ENCODE measurements at regions of chr3 and their contacts with region 1.

Region 1: GRCh38 chr3:124905849-124906248 is 18.7 kb upstream of the ITGB5 start:
- DNase-seq: no peak
- ATAC-seq: no peak
- H3K4me3 ChIP-seq: no peak overlapping the region
- H3K27ac ChIP-seq: no peak overlapping the region
- H3K4me1 ChIP-seq: no peaks in the 10 kb centered on the region
- H3K27me3 ChIP-seq: peaks cover 5 to 11% of the 10 kb centered on the region in 2 experiments; a peak in 3 of 5 replicates
- CTCF ChIP-seq: peak in 1 of 3 experiments; percentile 6; a peak in 1 of 6 replicates
- EP300 ChIP-seq: no peak
- POLR2A ChIP-seq: no peak
- RAD21 ChIP-seq: 0 out of 4 replicates have a peak, but pooled peaks of 1 of the 2 experiments have one; percentile 30

Region 2: DNA sequence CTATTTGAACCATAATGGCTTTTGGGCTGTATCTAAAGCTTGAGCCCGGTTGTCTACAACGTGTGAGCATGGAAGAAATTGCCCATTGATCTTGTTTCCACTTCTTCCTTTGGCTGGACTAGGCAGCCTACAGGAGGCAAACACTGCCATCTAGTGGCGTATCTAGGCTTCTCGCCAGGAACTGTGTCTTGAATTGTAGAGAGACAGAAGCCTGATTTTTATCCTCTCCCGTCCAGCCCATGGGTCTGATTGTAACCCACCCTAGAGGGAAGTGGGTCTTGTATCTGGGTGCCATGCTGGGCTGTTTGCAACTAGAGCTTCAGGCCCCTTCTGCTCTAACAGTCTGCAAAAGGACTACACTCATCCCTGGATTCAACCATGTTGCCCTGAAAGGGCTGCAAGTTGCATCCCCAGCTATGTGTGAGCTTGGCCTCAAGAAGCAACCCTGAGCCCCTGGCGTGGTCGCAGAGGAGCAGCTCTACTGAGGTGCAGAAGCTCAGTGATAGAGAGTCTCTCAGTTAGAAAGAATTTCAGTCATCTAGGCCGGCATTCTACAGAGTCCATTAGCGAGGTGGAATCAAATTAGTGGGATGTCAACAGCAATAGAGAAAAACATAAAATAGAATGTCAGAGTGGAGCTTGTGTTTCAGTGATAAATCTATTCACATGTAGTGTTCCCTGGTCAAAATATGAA is 345.8 kb before region 1 on chr3:
- CTCF ChIA-PET with region 1: no interaction called
- POLR2A ChIA-PET with region 1: no interaction called
- in situ Hi-C with region 1: no loop called
- intact Hi-C with region 1: loop called (anchors 5 kb)
- DNase-seq: peak; percentile 62 to 77 (median 66)
- ATAC-seq: peak; percentile 91
- H3K4me3 ChIP-seq: no peak overlapping the region
- H3K27ac ChIP-seq: no peak overlapping the region
- H3K4me1 ChIP-seq: peaks cover 0 to 5% of the 10 kb centered on the region in 2 experiments; a peak in 3 of 5 replicates
- H3K27me3 ChIP-seq: peaks cover 0 to 9% of the 10 kb centered on the region in 2 experiments; a peak in 1 of 5 replicates
- CTCF ChIP-seq: peak; percentile 73 to 79 (median 77)
- EP300 ChIP-seq: no peak
- POLR2A ChIP-seq: no peak
- RAD21 ChIP-seq: peak; percentile 42 to 67

Region 3: DNA sequence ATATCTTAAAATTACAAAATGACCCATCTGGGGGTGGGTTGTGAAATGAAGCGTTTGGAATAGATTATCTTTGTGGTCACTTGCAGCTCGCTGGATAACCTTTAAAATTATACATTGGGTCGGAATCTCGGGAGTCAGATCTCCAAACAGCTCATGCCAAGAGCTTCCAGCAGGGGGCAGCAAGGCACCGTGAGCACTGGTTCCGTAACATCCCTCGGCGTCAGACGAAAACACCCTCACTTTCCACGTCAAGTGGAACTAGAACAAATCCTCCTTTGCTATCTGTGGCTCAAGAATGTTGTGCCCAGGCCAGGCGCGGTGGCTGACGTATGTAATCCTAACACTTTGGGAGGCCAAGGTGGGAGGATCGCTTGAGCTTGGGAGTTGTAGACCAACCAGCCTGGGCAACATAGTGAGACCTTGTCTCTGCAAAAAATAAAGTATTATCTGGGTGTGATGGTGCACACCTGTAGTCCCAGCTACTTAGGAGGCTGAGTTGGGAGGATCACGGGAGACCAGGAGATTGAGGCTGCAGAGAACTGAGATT is 144.5 kb before region 1 on chr3:
- CTCF ChIA-PET with region 1: interaction called, 25 read pairs
- POLR2A ChIA-PET with region 1: no interaction called
- in situ Hi-C with region 1: loop called (anchors 5 kb)
- intact Hi-C with region 1: loop called (anchors 1 kb)
- DNase-seq: peak; percentile 62 to 77 (median 66)
- ATAC-seq: peak; percentile 91
- H3K4me3 ChIP-seq: no peak overlapping the region
- H3K27ac ChIP-seq: no peak overlapping the region
- H3K4me1 ChIP-seq: no peaks in the 10 kb centered on the region; a peak in 1 of 5 replicates
- H3K27me3 ChIP-seq: no peaks in the 10 kb centered on the region
- CTCF ChIP-seq: peak; percentile 83 to 88 (median 86)
- EP300 ChIP-seq: no peak
- POLR2A ChIP-seq: no peak
- RAD21 ChIP-seq: peak; percentile 81 to 89

Region 4: DNA sequence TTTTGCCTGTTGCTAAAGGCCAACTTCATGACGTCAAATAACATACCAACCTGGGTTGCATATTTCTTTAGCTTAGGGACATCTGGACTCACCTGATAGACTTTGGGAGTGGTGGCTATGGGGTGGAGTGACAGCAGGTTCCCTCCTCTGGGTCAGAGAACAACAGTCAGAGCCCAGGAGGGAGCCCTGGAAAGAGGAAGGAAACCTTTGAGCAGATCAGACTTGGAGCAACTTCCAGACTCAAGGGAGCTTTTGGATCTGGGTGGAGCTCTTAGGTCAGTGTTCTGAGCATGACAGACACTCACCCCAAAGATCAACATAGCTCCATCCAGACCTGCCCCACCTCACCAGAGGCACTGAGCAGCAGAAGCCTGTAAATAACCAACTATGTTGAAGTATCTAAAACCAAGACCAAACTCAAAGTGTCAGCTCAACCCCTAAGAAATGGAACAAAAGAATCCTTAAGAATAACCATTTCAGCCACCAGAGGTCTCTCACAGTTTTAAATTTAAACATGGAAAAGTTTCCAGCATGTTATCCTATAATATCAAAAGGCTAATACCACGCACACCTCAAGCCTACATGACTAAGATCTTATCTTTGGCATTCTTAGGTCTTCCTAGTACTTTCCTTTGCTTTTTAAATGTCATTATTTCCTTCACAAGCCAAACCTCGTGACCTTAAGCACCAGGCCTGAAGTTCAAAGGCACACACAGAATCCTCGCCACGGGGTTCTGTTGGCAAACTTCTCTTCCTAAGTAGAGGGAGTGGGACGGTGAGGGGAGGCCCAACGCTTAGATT is 119.2 kb before region 1 on chr3:
- CTCF ChIA-PET with region 1: interaction called, 21 read pairs
- POLR2A ChIA-PET with region 1: no interaction called
- in situ Hi-C with region 1: no loop called
- intact Hi-C with region 1: loop called (anchors 2 kb)
- DNase-seq: no peak
- ATAC-seq: no peak
- H3K4me3 ChIP-seq: no peak overlapping the region
- H3K27ac ChIP-seq: no peak overlapping the region
- H3K4me1 ChIP-seq: no peaks in the 10 kb centered on the region; a peak in 1 of 5 replicates
- H3K27me3 ChIP-seq: no peaks in the 10 kb centered on the region
- CTCF ChIP-seq: peak in 1 of 3 experiments; percentile 44; a peak in 2 of 6 replicates
- EP300 ChIP-seq: no peak
- POLR2A ChIP-seq: no peak
- RAD21 ChIP-seq: peak; percentile 51 to 62

Region 5: GRCh38 chr3:124860599-124860998 is 45.2 kb before region 1 on chr3:
- CTCF ChIA-PET with region 1: no interaction called
- POLR2A ChIA-PET with region 1: no interaction called
- in situ Hi-C with region 1: no loop called
- intact Hi-C with region 1: no loop called
- DNase-seq: no peak
- ATAC-seq: no peak
- H3K4me3 ChIP-seq: no peak overlapping the region
- H3K27ac ChIP-seq: no peak overlapping the region
- H3K4me1 ChIP-seq: peaks cover 0 to 3% of the 10 kb centered on the region in 2 experiments; a peak in 2 of 5 replicates
- H3K27me3 ChIP-seq: no peaks in the 10 kb centered on the region
- CTCF ChIP-seq: no peak
- EP300 ChIP-seq: no peak
- POLR2A ChIP-seq: no peak
- RAD21 ChIP-seq: no peak

Region 6: GRCh38 chr3:124976383-124976782 is 70.5 kb after region 1 on chr3:
- CTCF ChIA-PET with region 1: no interaction called
- POLR2A ChIA-PET with region 1: no interaction called
- in situ Hi-C with region 1: no loop called
- intact Hi-C with region 1: no loop called
- DNase-seq: no peak
- ATAC-seq: no peak
- H3K4me3 ChIP-seq: no peak overlapping the region
- H3K27ac ChIP-seq: no peak overlapping the region
- H3K4me1 ChIP-seq: no peaks in the 10 kb centered on the region
- H3K27me3 ChIP-seq: peaks cover 0 to 8% of the 10 kb centered on the region in 2 experiments; a peak in 2 of 5 replicates
- CTCF ChIP-seq: no peak
- EP300 ChIP-seq: no peak
- POLR2A ChIP-seq: no peak
- RAD21 ChIP-seq: no peak